ENCODE measurements at regions of chr9 and their contacts with region 1.

Region 1: DNA sequence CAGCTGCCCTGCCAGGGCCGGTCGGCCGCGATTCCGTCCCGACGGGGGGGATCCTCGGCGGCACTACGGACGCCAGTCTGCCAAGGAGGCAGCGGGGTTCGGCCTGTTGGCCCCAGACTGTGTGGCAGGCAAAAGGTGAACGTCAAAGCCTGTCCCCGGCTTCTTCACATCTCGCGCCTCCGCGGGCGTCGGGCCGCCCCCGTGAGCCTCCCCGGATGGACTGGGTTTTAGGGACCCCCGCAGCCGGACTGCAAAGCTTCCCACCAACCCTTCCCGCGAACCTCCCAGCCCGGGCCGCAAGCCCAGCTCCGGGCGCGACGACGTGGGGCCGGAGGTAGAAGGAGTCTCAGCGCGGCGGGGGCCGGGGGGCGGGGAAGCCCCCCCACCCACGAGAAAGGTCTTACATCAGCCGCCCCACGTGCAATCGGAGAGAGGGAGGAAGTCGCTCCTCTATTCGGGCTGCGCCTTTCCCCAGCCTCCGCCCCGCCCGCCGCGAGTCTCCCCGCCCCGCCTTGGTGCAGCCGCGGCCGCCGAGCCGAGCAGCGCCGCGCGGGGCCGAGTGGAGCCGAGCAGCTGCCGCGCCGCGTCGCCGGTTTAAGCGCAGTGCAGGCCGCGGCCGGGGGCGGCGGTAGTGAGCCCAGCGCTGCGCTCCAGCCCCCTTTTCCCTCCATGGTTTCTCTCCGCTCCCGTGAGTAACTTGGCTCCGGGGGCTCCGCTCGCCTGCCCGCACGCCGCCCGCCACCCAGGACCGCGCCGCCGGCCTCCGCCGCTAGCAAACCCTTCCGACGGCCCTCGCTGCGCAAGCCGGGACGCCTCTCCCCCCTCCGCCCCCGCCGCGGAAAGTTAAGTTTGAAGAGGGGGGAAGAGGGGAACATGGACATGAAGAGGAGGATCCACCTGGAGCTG is at the start of gene ANP32B:
- DNase-seq: peak; percentile 91
- H3K4me3 Mint-ChIP-seq: peak within 1 kb of the TSS; percentile 79
- H3K27ac Mint-ChIP-seq: peak within 1 kb of the TSS; percentile 63
- H3K4me1 Mint-ChIP-seq: peaks cover 31% of the 10 kb centered on the region
- H3K27me3 Mint-ChIP-seq: no peaks in the 10 kb centered on the region
- CTCF ChIP-seq: peak; percentile 83
- total RNA-seq, gene ANP32B: 218 and 245 TPM in 2 replicates

Region 2: GRCh38 chr9:97970165-97970564 is 12.8 kb before region 1 on chr9:
- CTCF ChIA-PET with region 1: interaction called, 10 read pairs
- POLR2A ChIA-PET with region 1: interaction called, 12 read pairs
- intact Hi-C with region 1: no loop called
- DNase-seq: no peak
- H3K4me3 Mint-ChIP-seq: no peak overlapping the region
- H3K27ac Mint-ChIP-seq: no peak overlapping the region
- H3K4me1 Mint-ChIP-seq: no peaks in the 10 kb centered on the region
- H3K27me3 Mint-ChIP-seq: peaks cover 23% of the 10 kb centered on the region
- CTCF ChIP-seq: no peak

Region 3: GRCh38 chr9:98056269-98057137 is 73.6 kb after region 1 on chr9 and contains the start of gene NANS:
- CTCF ChIA-PET with region 1: interaction called, 4 read pairs
- POLR2A ChIA-PET with region 1: interaction called, 29 read pairs
- intact Hi-C with region 1: loop called (anchors 2 kb)
- DNase-seq: peak; percentile 94
- H3K4me3 Mint-ChIP-seq: peak within 1 kb of the TSS; percentile 98
- H3K27ac Mint-ChIP-seq: peak within 1 kb of the TSS; percentile 97
- H3K4me1 Mint-ChIP-seq: peaks cover 4% of the 10 kb centered on the region
- H3K27me3 Mint-ChIP-seq: no peaks in the 10 kb centered on the region
- CTCF ChIP-seq: no peak
- total RNA-seq, gene NANS: 80.8 and 102 TPM in 2 replicates